OCI-LY7 (cell line): ENCODE measurements at regions of chr13 and their contacts with region 1.

Region 1: DNA sequence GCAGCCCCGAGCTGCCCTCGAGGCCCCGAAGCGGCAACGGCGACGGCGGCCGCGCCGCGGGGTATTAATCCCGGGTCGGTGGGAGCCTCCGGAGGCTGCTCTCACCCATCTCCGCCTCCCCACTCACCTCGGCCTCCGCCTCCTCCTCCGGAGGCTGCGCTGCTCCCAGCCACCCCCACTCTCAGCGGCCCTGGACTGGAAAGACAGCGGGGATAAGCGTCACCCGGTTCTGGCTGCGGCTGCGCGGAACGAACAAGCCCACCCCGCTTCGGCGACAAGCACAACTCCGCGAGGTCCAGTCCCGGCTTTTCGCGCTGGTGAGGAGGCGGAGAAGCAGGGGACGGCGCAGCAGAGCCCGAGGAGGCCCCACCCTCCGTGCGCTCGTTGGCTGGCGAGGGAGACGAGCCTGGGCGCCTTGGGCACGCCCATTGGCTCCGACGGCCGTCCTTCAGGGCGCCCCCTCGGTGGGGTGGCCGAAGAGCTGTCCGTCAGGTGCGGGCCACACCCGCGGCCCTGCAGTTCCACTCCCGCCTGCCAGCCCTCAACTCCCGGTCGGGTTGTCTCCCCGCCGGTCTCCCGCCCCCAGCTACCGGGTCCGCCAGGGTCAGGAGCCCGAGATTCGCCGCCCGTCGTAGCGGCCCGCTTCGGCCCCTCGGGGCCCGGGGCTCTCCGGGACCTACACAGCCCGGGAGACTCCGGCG is at the start of gene ZMYM5:
- DNase-seq: peak; percentile 99
- H3K4me3 ChIP-seq: peak within 1 kb of the TSS; percentile 91
- H3K27ac ChIP-seq: peak within 1 kb of the TSS; percentile 89
- H3K4me1 ChIP-seq: peaks cover 23% of the 10 kb centered on the region
- CTCF ChIP-seq: no peak
- total RNA-seq, gene ZMYM5: 10.2 and 15.5 TPM in 2 replicates

Region 2: GRCh38 chr13:19567820-19568534 is 295.5 kb before region 1 on chr13:
- CTCF ChIA-PET with region 1: no interaction called
- POLR2A ChIA-PET with region 1: no interaction called
- intact Hi-C with region 1: loop called (anchors 5 kb)
- DNase-seq: no peak
- H3K4me3 ChIP-seq: no peak overlapping the region
- H3K27ac ChIP-seq: no peak overlapping the region
- H3K4me1 ChIP-seq: peaks cover 5% of the 10 kb centered on the region
- CTCF ChIP-seq: no peak

Region 3: GRCh38 chr13:19633479-19634255 is 229.8 kb before region 1 on chr13 and contains the start of gene MPHOSPH8:
- CTCF ChIA-PET with region 1: no interaction called
- POLR2A ChIA-PET with region 1: no interaction called
- intact Hi-C with region 1: loop called (anchors 10 kb)
- DNase-seq: peak; percentile 98
- H3K4me3 ChIP-seq: peak within 1 kb of the TSS; percentile 91
- H3K27ac ChIP-seq: peak within 1 kb of the TSS; percentile 32
- H3K4me1 ChIP-seq: peaks cover 17% of the 10 kb centered on the region
- CTCF ChIP-seq: no peak
- total RNA-seq, gene MPHOSPH8: 12.8 and 15.9 TPM in 2 replicates

Region 4: GRCh38 chr13:19782049-19782726 is 81.3 kb before region 1 on chr13:
- CTCF ChIA-PET with region 1: no interaction called
- POLR2A ChIA-PET with region 1: interaction called, 4 read pairs
- intact Hi-C with region 1: loop called (anchors 2 kb)
- DNase-seq: peak; percentile 63
- H3K4me3 ChIP-seq: peak overlapping the region; percentile 100
- H3K27ac ChIP-seq: peak overlapping the region; percentile 92
- H3K4me1 ChIP-seq: peaks cover 5% of the 10 kb centered on the region
- CTCF ChIP-seq: no peak

Region 5: GRCh38 chr13:19852766-19853165 is 10.7 kb before region 1 on chr13:
- CTCF ChIA-PET with region 1: no interaction called
- POLR2A ChIA-PET with region 1: interaction called, 12 read pairs
- intact Hi-C with region 1: no loop called
- DNase-seq: no peak
- H3K4me3 ChIP-seq: no peak overlapping the region
- H3K27ac ChIP-seq: no peak overlapping the region
- H3K4me1 ChIP-seq: no peaks in the 10 kb centered on the region
- CTCF ChIP-seq: no peak

Region 6: GRCh38 chr13:19959831-19960652 is 96.6 kb after region 1 on chr13:
- CTCF ChIA-PET with region 1: interaction called, 3 read pairs
- POLR2A ChIA-PET with region 1: no interaction called
- intact Hi-C with region 1: loop called (anchors 1 kb)
- DNase-seq: peak; percentile 94
- H3K4me3 ChIP-seq: peak overlapping the region; percentile 96
- H3K27ac ChIP-seq: peak overlapping the region; percentile 83
- H3K4me1 ChIP-seq: peaks cover 28% of the 10 kb centered on the region
- CTCF ChIP-seq: peak; percentile 86

Region 7: DNA sequence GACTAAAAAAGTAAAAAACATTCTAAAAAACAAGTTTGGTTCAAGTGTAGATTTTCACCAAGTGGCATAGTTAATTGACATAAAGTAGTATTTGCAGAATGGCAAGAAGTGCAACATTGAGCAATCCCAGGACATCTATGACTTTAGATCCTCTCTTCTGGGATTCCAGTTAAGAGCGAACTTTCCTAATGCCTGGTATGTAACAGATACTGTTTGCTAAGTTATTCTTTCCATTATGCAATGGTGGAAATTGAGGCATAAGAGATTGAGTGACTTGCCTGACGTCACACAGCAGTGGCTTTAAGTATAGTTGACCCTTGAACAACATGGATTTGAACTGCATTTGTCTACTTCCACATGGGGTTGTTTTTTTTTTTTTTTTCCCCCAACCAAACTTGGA is 191.2 kb after region 1 on chr13:
- CTCF ChIA-PET with region 1: no interaction called
- POLR2A ChIA-PET with region 1: no interaction called
- intact Hi-C with region 1: no loop called
- DNase-seq: no peak
- H3K4me3 ChIP-seq: no peak overlapping the region
- H3K27ac ChIP-seq: no peak overlapping the region
- H3K4me1 ChIP-seq: no peaks in the 10 kb centered on the region
- CTCF ChIP-seq: no peak

Region 8: DNA sequence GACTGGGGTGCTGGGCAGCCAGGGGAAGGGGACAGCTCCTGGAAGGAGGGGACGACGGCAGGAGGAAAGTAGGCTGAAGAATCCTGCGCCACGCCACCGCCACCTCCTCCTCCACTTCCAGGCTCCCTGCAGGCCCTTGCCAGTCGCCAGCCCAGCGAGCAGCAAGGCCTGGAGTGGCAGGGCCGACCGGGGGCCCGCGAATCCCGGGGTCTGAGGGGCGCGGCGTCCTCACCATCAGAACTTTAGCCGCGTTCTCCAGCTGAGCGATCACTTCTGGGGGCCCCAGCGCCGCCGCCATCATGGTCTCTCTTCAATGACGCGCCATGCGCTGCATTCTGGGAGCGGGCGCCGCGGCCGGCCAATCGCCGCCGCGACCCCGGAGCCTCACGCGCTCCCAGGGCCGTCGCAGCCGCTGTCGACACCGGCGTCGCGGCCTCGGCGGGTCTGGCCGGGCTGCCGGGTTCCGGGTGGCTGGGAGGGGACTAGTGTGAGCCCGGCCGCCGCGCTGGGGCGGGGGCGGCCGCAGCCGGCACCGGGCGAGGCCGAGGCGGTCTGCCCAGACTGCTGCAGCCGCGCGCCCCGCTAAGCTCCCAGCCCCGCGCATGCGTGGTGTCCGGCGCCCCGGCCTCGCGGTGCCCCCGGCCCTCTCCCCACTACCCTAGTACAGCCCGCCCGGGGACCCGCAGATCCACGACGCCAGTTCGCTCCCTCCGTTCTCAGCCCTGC is 1039.1 kb after region 1 on chr13 and contains the start of gene XPO4:
- CTCF ChIA-PET with region 1: no interaction called
- POLR2A ChIA-PET with region 1: interaction called, 3 read pairs
- intact Hi-C with region 1: loop called (anchors 5 kb)
- DNase-seq: peak; percentile 86
- H3K4me3 ChIP-seq: peak within 1 kb of the TSS; percentile 99
- H3K27ac ChIP-seq: peak within 1 kb of the TSS; percentile 64
- H3K4me1 ChIP-seq: peaks cover 20% of the 10 kb centered on the region
- CTCF ChIP-seq: no peak
- total RNA-seq, gene XPO4: 20.6 and 22.9 TPM in 2 replicates